Ascending aorta (tissue), 2 donors: ENCODE measurements at regions of chr3 and their contacts with region 1.

Region 1: GRCh38 chr3:8458711-8459110 is 42.9 kb upstream of the LMCD1 start:
- DNase-seq: peak; percentile 77 to 96
- H3K4me3 ChIP-seq: no peak overlapping the region
- H3K27ac ChIP-seq: peak overlapping the region; percentile 93 to 97
- H3K4me1 ChIP-seq: peaks cover 0 to 54% of the 10 kb centered on the region in 2 donors
- H3K27me3 ChIP-seq: no peaks in the 10 kb centered on the region
- CTCF ChIP-seq: no peak

Region 2: GRCh38 chr3:8482960-8483665 is 24.4 kb after region 1 on chr3:
- intact Hi-C with region 1: loop called (anchors 1 kb)
- DNase-seq: peak; percentile 54 to 95
- H3K4me3 ChIP-seq: no peak overlapping the region
- H3K27ac ChIP-seq: peak overlapping the region; percentile 86 to 94
- H3K4me1 ChIP-seq: peaks cover 11 to 63% of the 10 kb centered on the region in 2 donors
- H3K27me3 ChIP-seq: no peaks in the 10 kb centered on the region
- CTCF ChIP-seq: no peak

Region 3: GRCh38 chr3:8488411-8488810 is 29.7 kb after region 1 on chr3:
- intact Hi-C with region 1: loop called (anchors 1 kb)
- DNase-seq: peak in 1 of 2 donors; percentile 77
- H3K4me3 ChIP-seq: no peak overlapping the region
- H3K27ac ChIP-seq: peak overlapping the region; percentile 86 to 94
- H3K4me1 ChIP-seq: peaks cover 12 to 64% of the 10 kb centered on the region in 2 donors
- H3K27me3 ChIP-seq: no peaks in the 10 kb centered on the region
- CTCF ChIP-seq: peak in 2 of 3 experiments; percentile 28 to 32

Region 4: DNA sequence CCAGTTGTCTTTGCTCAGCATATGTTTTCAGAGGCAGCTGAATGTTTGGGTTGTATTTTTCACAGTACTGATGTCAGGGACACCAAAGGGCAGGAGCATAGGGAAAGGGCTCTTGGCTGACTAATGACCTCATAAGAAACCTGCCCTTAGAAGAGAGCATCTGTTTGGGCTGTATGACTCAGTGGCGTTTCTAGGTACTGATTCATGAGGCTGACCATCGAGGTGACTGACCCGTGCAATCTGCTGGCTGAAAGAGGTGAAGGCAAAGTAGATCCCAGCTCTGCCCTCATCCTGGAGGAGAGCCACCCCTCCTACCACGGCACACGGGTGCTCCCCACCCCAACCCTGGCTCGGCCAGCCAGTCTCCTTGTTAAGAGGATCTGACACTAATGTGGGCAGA is 51.2 kb after region 1 on chr3:
- intact Hi-C with region 1: no loop called
- DNase-seq: peak; percentile 31 to 79
- H3K4me3 ChIP-seq: peak overlapping the region; percentile 25 to 77
- H3K27ac ChIP-seq: peak overlapping the region; percentile 81 to 91
- H3K4me1 ChIP-seq: peaks cover 14 to 60% of the 10 kb centered on the region in 2 donors
- H3K27me3 ChIP-seq: no peaks in the 10 kb centered on the region
- CTCF ChIP-seq: no peak